K562 (cell line): ENCODE measurements at regions of chr22 and their contacts with region 1.

Region 1: DNA sequence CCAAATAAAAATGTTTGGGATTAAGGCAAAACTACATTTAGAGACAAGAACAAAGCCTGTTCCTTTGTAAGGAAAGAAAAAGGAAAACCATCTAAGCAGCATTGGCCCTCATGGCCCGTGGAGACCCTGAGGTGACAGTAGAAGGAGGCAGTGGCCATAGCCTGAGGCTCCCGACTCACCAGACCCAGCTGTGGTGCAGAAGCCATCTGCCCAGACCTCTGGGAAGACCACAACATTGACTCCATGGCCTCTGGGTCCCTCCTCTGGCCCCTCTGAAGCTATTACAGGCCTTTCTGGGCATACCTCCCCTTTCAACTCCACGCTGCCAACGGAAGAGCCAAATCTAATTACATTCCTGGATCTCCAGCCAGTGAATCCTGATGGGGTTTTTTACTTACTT is 6.4 kb downstream of the PRAME start:
- DNase-seq: peak; percentile 84 to 87 (median 86)
- ATAC-seq: peak; percentile 21
- H3K4me3 ChIP-seq: no peak overlapping the region
- H3K27ac ChIP-seq: peak overlapping the region; percentile 2; the same call in 2 of the 3 replicates
- H3K4me1 ChIP-seq: peaks cover 52 to 63% of the 10 kb centered on the region in 2 experiments
- H3K27me3 ChIP-seq: no peaks in the 10 kb centered on the region
- CTCF ChIP-seq: no peak
- EP300 ChIP-seq: no peak
- POLR2A ChIP-seq: no peak
- RAD21 ChIP-seq: no peak

Region 2: DNA sequence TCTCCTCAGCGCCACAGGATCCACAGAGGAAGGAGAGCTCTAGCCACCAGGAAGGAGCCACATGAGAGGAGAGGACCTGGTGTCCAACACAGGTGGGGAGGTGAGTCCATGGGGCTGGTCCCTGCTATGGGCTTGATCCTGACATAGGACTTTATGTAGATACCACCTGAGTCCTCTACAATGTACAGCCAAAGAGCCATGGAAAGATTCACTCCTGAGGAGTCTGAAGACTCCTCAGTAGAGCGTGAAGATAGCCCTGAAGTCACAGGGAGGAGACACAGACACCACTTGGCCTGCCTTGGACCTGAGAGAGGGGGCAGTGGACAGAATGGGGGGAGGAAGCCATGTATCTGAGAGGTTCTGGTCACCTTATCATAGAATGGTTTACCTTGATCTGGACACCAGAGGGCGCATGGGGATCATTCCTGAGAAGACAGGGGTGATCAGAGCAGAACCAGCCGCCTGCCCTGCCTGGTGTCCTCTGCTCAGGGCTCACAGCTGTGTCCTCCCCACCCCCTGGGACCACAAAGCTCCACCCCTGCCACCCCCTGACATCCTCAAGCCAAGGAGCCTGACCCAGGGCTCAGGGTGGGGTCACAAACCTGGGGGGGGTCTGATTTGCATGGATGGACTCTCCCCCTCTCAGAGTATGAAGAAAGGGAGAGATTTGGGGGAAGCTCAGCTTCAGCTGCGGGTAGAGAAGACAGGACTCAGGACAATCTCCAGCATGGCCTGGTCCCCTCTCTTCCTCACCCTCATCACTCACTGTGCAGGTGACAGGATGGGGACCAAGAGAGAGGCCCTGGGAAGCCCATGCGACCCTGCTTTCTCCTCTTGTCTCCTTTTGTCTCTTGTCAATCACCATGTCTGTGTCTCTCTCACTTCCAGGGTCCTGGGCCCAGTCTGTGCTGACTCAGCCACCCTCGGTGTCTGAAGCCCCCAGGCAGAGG is 121.1 kb before region 1 on chr22:
- CTCF ChIA-PET with region 1: interaction called, 13 read pairs
- POLR2A ChIA-PET with region 1: interaction called, 3 read pairs
- in situ Hi-C with region 1: no loop called
- intact Hi-C with region 1: no loop called
- DNase-seq: peak; percentile 95 to 99 (median 98)
- ATAC-seq: peak; percentile 98
- H3K4me3 ChIP-seq: no peak overlapping the region
- H3K27ac ChIP-seq: no peak overlapping the region
- H3K4me1 ChIP-seq: no peaks in the 10 kb centered on the region
- H3K27me3 ChIP-seq: peaks cover 18 to 32% of the 10 kb centered on the region in 2 experiments; a peak in 4 of 5 replicates
- CTCF ChIP-seq: peak; percentile 97 to 100 (median 99)
- EP300 ChIP-seq: no peak
- POLR2A ChIP-seq: no peak
- RAD21 ChIP-seq: peak; percentile 92 to 99

Region 3: DNA sequence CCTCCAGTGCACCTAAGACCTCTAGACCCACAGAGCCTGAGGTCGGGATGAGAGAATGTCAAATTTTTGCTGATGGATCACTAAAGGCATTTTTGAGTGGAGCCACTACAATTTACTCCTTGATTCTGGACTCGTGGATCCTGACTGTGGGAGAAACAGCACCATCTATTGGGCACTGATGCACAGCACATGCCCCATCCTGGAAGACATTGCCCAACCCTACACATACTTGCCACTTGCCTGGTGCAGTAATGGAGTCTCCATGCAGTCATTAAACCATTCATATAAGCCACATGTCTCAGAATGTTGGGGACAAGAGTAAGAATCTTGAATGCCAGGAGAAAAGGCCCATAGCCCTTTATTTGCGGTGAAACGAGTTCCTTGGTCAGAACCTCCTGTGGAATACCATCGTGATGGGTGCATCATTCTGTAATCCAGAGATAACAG is 195.7 kb after region 1 on chr22:
- CTCF ChIA-PET with region 1: no interaction called
- POLR2A ChIA-PET with region 1: no interaction called
- in situ Hi-C with region 1: no loop called
- intact Hi-C with region 1: no loop called
- DNase-seq: peak; percentile 73 to 86 (median 82)
- ATAC-seq: peak; percentile 87
- H3K4me3 ChIP-seq: no peak overlapping the region
- H3K27ac ChIP-seq: no peak overlapping the region
- H3K4me1 ChIP-seq: no peaks in the 10 kb centered on the region
- H3K27me3 ChIP-seq: peaks cover 4 to 30% of the 10 kb centered on the region in 2 experiments; a peak in 3 of 5 replicates
- CTCF ChIP-seq: no peak
- EP300 ChIP-seq: no peak
- POLR2A ChIP-seq: no peak
- RAD21 ChIP-seq: peak in 1 of 2 experiments; percentile 76; a peak in 2 of 4 replicates

Region 4: GRCh38 chr22:22884010-22884887 is 331.6 kb after region 1 on chr22:
- CTCF ChIA-PET with region 1: no interaction called
- POLR2A ChIA-PET with region 1: no interaction called
- in situ Hi-C with region 1: no loop called
- intact Hi-C with region 1: no loop called
- DNase-seq: peak; percentile 57 to 100 (median 78)
- ATAC-seq: peak; percentile 94
- H3K4me3 ChIP-seq: no peak overlapping the region
- H3K27ac ChIP-seq: no peak overlapping the region
- H3K4me1 ChIP-seq: peaks cover 0 to 9% of the 10 kb centered on the region in 2 experiments; a peak in 1 of 5 replicates
- H3K27me3 ChIP-seq: peaks cover 0 to 46% of the 10 kb centered on the region in 2 experiments; a peak in 2 of 5 replicates
- CTCF ChIP-seq: no peak
- EP300 ChIP-seq: no peak
- POLR2A ChIP-seq: no peak
- RAD21 ChIP-seq: no peak

Region 5: GRCh38 chr22:22942511-22943329 is 390.1 kb after region 1 on chr22:
- CTCF ChIA-PET with region 1: no interaction called
- POLR2A ChIA-PET with region 1: no interaction called
- in situ Hi-C with region 1: no loop called
- intact Hi-C with region 1: no loop called
- DNase-seq: peak; percentile 99 to 100 (median 100)
- ATAC-seq: peak; percentile 94
- H3K4me3 ChIP-seq: no peak overlapping the region
- H3K27ac ChIP-seq: no peak overlapping the region
- H3K4me1 ChIP-seq: peaks cover 0 to 3% of the 10 kb centered on the region in 2 experiments; a peak in 1 of 5 replicates
- H3K27me3 ChIP-seq: peaks cover 19 to 38% of the 10 kb centered on the region in 2 experiments; a peak in 4 of 5 replicates
- CTCF ChIP-seq: no peak
- EP300 ChIP-seq: no peak
- POLR2A ChIP-seq: no peak
- RAD21 ChIP-seq: no peak